Thyroid gland (tissue), 4 donors: ENCODE measurements at regions of chr6 and their contacts with region 1.

Region 1: GRCh38 chr6:26196846-26197648 is 109.8 kb downstream of the HFE start:
- DNase-seq: peak; percentile 86 to 88
- H3K4me3 ChIP-seq: peak overlapping the region; percentile 6 to 63 (median 9)
- H3K27ac ChIP-seq: peak overlapping the region; percentile 77 to 97 (median 89)
- H3K4me1 ChIP-seq: peaks cover 4 to 5% of the 10 kb centered on the region in 2 donors
- H3K27me3 ChIP-seq: no peaks in the 10 kb centered on the region
- CTCF ChIP-seq: no peak
- POLR2A ChIP-seq: peak in 1 of 2 donors; percentile 92

Region 2: GRCh38 chr6:26054857-26055669 is 142.0 kb before region 1 on chr6:
- intact Hi-C with region 1: loop called (anchors 10 kb)
- DNase-seq: peak; percentile 92
- H3K4me3 ChIP-seq: peak overlapping the region; percentile 59 to 88 (median 63)
- H3K27ac ChIP-seq: peak overlapping the region; percentile 85 to 95 (median 95)
- H3K4me1 ChIP-seq: peaks cover 5 to 11% of the 10 kb centered on the region in 2 donors
- H3K27me3 ChIP-seq: no peaks in the 10 kb centered on the region
- CTCF ChIP-seq: peak in 3 of 6 experiments; percentile 22 to 49 (median 42)
- POLR2A ChIP-seq: peak in 1 of 2 donors; percentile 53

Region 3: DNA sequence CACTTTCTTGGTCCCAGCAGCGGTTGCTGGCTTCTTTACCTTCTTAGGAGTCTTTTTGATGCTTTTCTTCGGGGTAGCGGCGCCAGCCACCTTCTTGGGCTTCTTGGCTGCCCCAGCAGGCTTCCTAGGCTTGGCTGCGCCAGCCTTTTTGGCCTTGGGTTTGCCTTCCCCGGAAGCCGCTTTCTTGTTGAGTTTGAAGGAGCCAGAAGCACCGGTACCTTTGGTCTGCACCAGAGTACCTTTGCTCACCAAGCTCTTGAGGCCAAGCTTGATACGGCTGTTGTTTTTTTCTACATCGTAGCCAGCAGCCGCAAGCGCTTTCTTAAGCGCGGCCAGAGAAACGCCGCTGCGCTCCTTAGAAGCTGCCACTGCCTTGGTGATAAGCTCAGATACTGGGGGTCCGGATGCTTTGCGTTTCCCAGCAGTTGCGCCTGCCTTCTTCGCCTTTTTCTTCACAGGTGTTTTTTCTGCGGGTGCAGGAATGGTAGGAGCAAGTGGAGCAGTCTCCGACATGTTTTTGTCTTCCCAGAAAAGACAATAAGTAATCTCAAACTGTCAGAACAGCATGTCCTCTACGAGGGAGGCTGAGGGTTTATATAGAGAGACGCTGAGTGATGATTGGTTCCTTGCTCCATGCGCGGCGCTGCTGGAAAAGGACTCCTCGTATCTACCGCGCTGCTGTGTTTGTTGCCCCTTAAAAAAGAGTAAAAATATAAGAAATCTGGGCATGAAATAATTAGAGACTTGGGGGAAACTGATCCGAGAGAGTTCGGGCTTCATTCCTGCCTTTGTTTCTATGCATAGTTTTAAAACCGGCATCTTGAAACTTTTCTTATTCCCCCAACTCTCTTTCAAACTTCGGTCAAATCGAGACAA is 37.6 kb after region 1 on chr6:
- intact Hi-C with region 1: no loop called
- DNase-seq: peak; percentile 61 to 66
- H3K4me3 ChIP-seq: peak overlapping the region; percentile 16 to 33 (median 19)
- H3K27ac ChIP-seq: peak overlapping the region; percentile 55 to 72 (median 55)
- H3K4me1 ChIP-seq: peaks cover 0 to 5% of the 10 kb centered on the region in 2 donors
- H3K27me3 ChIP-seq: peaks cover 6% of the 10 kb centered on the region
- CTCF ChIP-seq: no peak
- POLR2A ChIP-seq: peak; percentile 33 to 80